Panc1 (cell line): ENCODE measurements at regions of chr3 and their contacts with region 1.

Region 1: GRCh38 chr3:194682694-194683310 is 2.9 kb upstream of the FAM43A start:
- DNase-seq: peak; percentile 91
- ATAC-seq: peak; percentile 74
- H3K4me3 ChIP-seq: peak overlapping the region in 1 of 2 experiments; percentile 15; a peak in 1 of 4 replicates
- H3K27ac ChIP-seq: peak overlapping the region; percentile 39
- H3K4me1 ChIP-seq: peaks cover 21% of the 10 kb centered on the region
- H3K27me3 ChIP-seq: no peaks in the 10 kb centered on the region
- CTCF ChIP-seq: peak; percentile 95

Region 2: GRCh38 chr3:193894121-193894863 is 788.5 kb before region 1 on chr3:
- CTCF ChIA-PET with region 1: no interaction called
- POLR2A ChIA-PET with region 1: no interaction called
- in situ Hi-C with region 1: no loop called
- intact Hi-C with region 1: no loop called
- DNase-seq: no peak
- ATAC-seq: no peak
- H3K4me3 ChIP-seq: no peak overlapping the region
- H3K27ac ChIP-seq: no peak overlapping the region
- H3K4me1 ChIP-seq: no peaks in the 10 kb centered on the region
- H3K27me3 ChIP-seq: no peaks in the 10 kb centered on the region
- CTCF ChIP-seq: no peak

Region 3: GRCh38 chr3:194671900-194672808 is 10.6 kb before region 1 on chr3 and contains the start of gene LSG1:
- CTCF ChIA-PET with region 1: interaction called, 14 read pairs
- POLR2A ChIA-PET with region 1: no interaction called
- in situ Hi-C with region 1: no loop called
- intact Hi-C with region 1: no loop called
- DNase-seq: peak; percentile 92
- ATAC-seq: peak; percentile 97
- H3K4me3 ChIP-seq: peak within 1 kb of the TSS; percentile 92 to 95
- H3K27ac ChIP-seq: peak within 1 kb of the TSS; percentile 99
- H3K4me1 ChIP-seq: peaks cover 17% of the 10 kb centered on the region
- H3K27me3 ChIP-seq: no peaks in the 10 kb centered on the region
- CTCF ChIP-seq: no peak
- total RNA-seq, gene LSG1: 72.9 TPM

Region 4: GRCh38 chr3:194871143-194871863 is 188.5 kb after region 1 on chr3:
- CTCF ChIA-PET with region 1: interaction called, 5 read pairs
- POLR2A ChIA-PET with region 1: no interaction called
- in situ Hi-C with region 1: no loop called
- intact Hi-C with region 1: loop called (anchors 10 kb)
- DNase-seq: no peak
- ATAC-seq: peak; percentile 91
- H3K4me3 ChIP-seq: no peak overlapping the region; a peak in 1 of 4 replicates
- H3K27ac ChIP-seq: peak overlapping the region; percentile 36
- H3K4me1 ChIP-seq: peaks cover 27% of the 10 kb centered on the region
- H3K27me3 ChIP-seq: no peaks in the 10 kb centered on the region
- CTCF ChIP-seq: no peak

Region 5: GRCh38 chr3:195106418-195106906 is 423.7 kb after region 1 on chr3:
- CTCF ChIA-PET with region 1: interaction called, 6 read pairs
- POLR2A ChIA-PET with region 1: no interaction called
- in situ Hi-C with region 1: no loop called
- intact Hi-C with region 1: loop called (anchors 5 kb)
- DNase-seq: no peak
- ATAC-seq: peak; percentile 77
- H3K4me3 ChIP-seq: peak overlapping the region in 1 of 2 experiments; percentile 39; a peak in 2 of 4 replicates
- H3K27ac ChIP-seq: peak overlapping the region; percentile 100
- H3K4me1 ChIP-seq: peaks cover 53% of the 10 kb centered on the region
- H3K27me3 ChIP-seq: no peaks in the 10 kb centered on the region
- CTCF ChIP-seq: peak; percentile 100

Region 6: DNA sequence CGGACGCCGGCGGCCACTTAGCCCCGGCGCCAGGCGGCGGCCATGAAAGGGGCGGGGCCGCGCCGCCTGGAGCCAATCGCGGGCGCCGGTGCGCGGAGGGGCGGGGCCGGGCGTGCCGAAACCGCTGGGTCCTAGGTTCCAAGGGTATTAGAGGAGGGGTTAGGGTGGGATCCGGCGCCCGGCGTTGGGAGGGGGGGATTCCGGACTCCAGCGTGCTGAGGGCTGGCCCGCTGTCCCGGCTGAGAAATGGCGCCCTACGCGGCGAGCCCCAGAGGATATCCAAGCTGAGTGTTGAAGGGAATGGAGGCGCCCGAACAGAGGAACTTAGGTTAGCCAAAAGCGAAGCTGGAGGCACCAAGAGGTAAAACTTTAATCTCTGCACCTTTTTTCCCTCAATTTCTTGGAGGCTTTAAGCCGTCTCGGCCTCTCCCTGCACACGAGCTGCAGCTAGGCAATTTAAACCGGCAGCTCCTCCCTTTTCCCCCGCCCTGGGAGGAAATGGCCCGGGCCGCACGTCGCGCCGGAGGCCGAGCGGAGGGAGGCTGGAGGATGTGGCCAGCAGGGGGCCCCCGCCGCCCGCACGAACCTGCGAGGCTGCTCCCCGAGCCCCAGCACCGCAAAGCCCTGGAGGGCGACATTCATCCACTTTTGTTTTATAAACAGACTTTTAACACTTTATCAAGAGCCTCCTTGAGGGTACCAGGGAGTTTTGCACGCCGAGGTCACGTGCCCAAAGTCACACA is 588.5 kb after region 1 on chr3 and contains the start of gene XXYLT1:
- CTCF ChIA-PET with region 1: interaction called, 22 read pairs
- POLR2A ChIA-PET with region 1: interaction called, 5 read pairs
- in situ Hi-C with region 1: no loop called
- intact Hi-C with region 1: no loop called
- DNase-seq: peak; percentile 52
- ATAC-seq: peak; percentile 93
- H3K4me3 ChIP-seq: peak within 1 kb of the TSS; percentile 76 to 91
- H3K27ac ChIP-seq: peak within 1 kb of the TSS; percentile 92
- H3K4me1 ChIP-seq: peaks cover 19% of the 10 kb centered on the region
- H3K27me3 ChIP-seq: no peaks in the 10 kb centered on the region
- CTCF ChIP-seq: peak; percentile 98
- total RNA-seq, gene XXYLT1: 26.0 TPM